Kidney (tissue), 22 donors: ENCODE measurements at regions of chr18 and their contacts with region 1.

Region 1: GRCh38 chr18:11943551-11943950 is 35.4 kb upstream of the MPPE1 start:
- DNase-seq: no peak
- H3K4me3 ChIP-seq: no peak overlapping the region
- H3K27ac ChIP-seq: no peak overlapping the region
- H3K4me1 ChIP-seq: peaks cover 0 to 4% (median 3%) of the 10 kb centered on the region in 3 donors
- H3K27me3 ChIP-seq: no peaks in the 10 kb centered on the region
- CTCF ChIP-seq: no peak

Region 2: DNA sequence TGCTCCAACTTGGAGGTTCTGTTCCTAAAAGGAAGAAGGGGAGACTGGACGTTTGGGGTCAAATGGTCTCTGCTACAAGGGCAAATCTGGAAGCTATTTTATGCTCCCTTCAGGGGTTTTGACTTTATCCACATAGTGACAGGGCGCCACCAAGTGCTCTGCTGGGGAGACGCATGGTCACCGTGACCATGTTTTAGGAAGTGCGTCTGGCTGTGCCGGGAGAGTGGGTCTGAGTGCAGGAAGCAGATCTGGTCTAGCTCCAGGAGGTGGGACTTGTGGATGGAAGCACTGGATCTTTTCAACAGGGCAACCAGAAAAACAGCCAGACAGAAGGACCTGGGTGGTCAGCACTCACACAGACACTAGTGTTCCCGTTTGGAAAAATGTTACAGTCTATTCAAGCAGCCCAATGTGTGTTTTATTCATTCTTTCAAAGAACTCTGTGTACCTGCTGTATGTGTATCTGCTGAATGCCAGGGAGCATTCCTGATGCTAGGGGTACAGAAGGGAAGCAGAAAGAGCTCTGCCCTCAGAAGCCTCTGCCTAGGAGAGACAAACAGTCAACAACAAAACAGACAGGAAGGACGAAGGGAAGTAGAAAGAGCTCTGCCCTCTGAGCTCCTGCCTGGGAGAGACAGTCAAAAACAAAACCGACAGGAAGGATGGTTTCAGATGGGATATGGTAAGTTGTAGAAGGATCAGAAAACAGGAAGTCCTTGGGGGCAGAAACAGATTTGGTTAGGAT is 52.1 kb after region 1 on chr18:
- intact Hi-C with region 1: loop called (anchors 5 kb)
- DNase-seq: peak; percentile 63 to 88 (median 75)
- H3K4me3 ChIP-seq: peak overlapping the region in 1 of 3 donors; percentile 64
- H3K27ac ChIP-seq: peak overlapping the region; percentile 93 to 96
- H3K4me1 ChIP-seq: peaks cover 3 to 69% (median 59%) of the 10 kb centered on the region in 3 donors
- H3K27me3 ChIP-seq: no peaks in the 10 kb centered on the region
- CTCF ChIP-seq: peak; percentile 86